ENCODE measurements at regions of chr9 and their contacts with region 1.

Region 1: GRCh38 chr9:112333639-112334431 is 416 bp upstream of the PTBP3 start:
- DNase-seq: peak; percentile 86 to 89 (median 87)
- H3K4me3 ChIP-seq: peak overlapping the region; percentile 31 to 81
- H3K4me3 Mint-ChIP-seq: peak overlapping the region; percentile 81 to 96 (median 94)
- H3K27ac ChIP-seq: peak overlapping the region; percentile 92
- H3K27ac Mint-ChIP-seq: peak overlapping the region; percentile 82 to 96 (median 92)
- H3K4me1 ChIP-seq: peaks cover 41% of the 10 kb centered on the region
- H3K4me1 Mint-ChIP-seq: peaks cover 23 to 45% (median 28%) of the 10 kb centered on the region in 4 donors
- H3K27me3 ChIP-seq: no peaks in the 10 kb centered on the region
- H3K27me3 Mint-ChIP-seq: no peaks in the 10 kb centered on the region

Region 2: DNA sequence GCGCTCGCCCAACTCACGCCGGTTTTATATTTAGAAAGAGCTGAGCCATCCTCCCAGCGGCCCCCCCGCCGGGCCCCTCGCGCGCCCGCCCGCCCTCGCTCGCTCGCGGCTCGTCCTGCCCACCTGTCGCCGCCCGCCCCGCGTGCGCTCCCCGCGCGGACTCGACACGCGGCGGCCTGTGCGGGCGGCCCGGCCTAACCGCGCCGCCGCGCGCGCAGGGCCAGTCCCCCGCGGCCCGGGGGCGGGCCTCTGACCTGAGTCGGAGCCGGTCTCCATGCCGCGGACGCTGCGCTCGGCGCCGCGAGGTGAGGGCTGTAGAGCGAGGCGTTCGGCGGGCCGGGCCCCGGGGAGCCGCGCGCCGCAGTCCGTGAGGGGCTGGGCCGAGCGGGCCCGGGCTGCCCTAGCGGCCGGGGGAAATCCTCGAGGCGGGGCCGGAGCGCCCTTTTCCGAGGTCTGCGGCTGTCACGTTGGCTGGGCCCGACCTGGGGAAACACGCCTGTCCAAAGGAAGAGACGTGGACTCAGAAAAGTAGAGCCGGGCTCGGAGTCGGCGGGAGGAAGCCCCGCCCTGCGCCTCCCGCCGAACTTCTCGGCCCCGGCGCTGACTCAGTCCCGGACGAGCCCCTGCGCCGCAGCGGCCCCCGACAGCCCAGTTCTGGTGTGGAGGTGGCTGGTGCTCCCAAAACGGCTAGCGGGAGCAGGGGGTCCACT is 849.8 kb before region 1 on chr9 and contains the start of gene ECPAS:
- CTCF ChIA-PET with region 1: no interaction called
- POLR2A ChIA-PET with region 1: no interaction called
- intact Hi-C with region 1: loop called (anchors 1 kb)
- DNase-seq: peak; percentile 66 to 72 (median 71)
- H3K4me3 ChIP-seq: peak within 1 kb of the TSS; percentile 69 to 89
- H3K4me3 Mint-ChIP-seq: peak within 1 kb of the TSS; percentile 81 to 90 (median 86)
- H3K27ac ChIP-seq: peak within 1 kb of the TSS; percentile 83
- H3K27ac Mint-ChIP-seq: peak within 1 kb of the TSS; percentile 86 to 93 (median 89)
- H3K4me1 ChIP-seq: peaks cover 11% of the 10 kb centered on the region
- H3K4me1 Mint-ChIP-seq: peaks cover 23 to 37% (median 28%) of the 10 kb centered on the region in 4 donors
- H3K27me3 ChIP-seq: no peaks in the 10 kb centered on the region
- H3K27me3 Mint-ChIP-seq: no peaks in the 10 kb centered on the region
- total RNA-seq, gene ECPAS: 77.6 to 80.3 TPM

Region 3: GRCh38 chr9:111896353-111896958 is 437.4 kb before region 1 on chr9 and contains the start of gene UGCG:
- CTCF ChIA-PET with region 1: no interaction called
- POLR2A ChIA-PET with region 1: interaction called, 15 read pairs
- intact Hi-C with region 1: loop called (anchors 1 kb)
- DNase-seq: peak; percentile 84 to 92 (median 89)
- H3K4me3 ChIP-seq: peak within 1 kb of the TSS; percentile 87 to 97
- H3K4me3 Mint-ChIP-seq: peak within 1 kb of the TSS; percentile 90 to 96 (median 93)
- H3K27ac ChIP-seq: peak within 1 kb of the TSS; percentile 70
- H3K27ac Mint-ChIP-seq: peak within 1 kb of the TSS; percentile 91 to 97 (median 95)
- H3K4me1 ChIP-seq: peaks cover 58% of the 10 kb centered on the region
- H3K4me1 Mint-ChIP-seq: peaks cover 23 to 32% (median 31%) of the 10 kb centered on the region in 4 donors
- H3K27me3 ChIP-seq: no peaks in the 10 kb centered on the region
- H3K27me3 Mint-ChIP-seq: no peaks in the 10 kb centered on the region
- total RNA-seq, gene UGCG: 26.3 to 29.7 TPM

Region 4: GRCh38 chr9:112061152-112061740 is 272.6 kb before region 1 on chr9:
- CTCF ChIA-PET with region 1: no interaction called
- POLR2A ChIA-PET with region 1: no interaction called
- intact Hi-C with region 1: no loop called
- DNase-seq: peak in 4 of 5 donors; percentile 16 to 53 (median 31)
- H3K4me3 ChIP-seq: no peak overlapping the region
- H3K4me3 Mint-ChIP-seq: no peak overlapping the region
- H3K27ac ChIP-seq: no peak overlapping the region
- H3K27ac Mint-ChIP-seq: peak overlapping the region in 6 of 7 donors; percentile 25 to 82 (median 56)
- H3K4me1 ChIP-seq: peaks cover 15% of the 10 kb centered on the region
- H3K4me1 Mint-ChIP-seq: peaks cover 13 to 34% (median 22%) of the 10 kb centered on the region in 4 donors
- H3K27me3 ChIP-seq: no peaks in the 10 kb centered on the region
- H3K27me3 Mint-ChIP-seq: no peaks in the 10 kb centered on the region

Region 5: DNA sequence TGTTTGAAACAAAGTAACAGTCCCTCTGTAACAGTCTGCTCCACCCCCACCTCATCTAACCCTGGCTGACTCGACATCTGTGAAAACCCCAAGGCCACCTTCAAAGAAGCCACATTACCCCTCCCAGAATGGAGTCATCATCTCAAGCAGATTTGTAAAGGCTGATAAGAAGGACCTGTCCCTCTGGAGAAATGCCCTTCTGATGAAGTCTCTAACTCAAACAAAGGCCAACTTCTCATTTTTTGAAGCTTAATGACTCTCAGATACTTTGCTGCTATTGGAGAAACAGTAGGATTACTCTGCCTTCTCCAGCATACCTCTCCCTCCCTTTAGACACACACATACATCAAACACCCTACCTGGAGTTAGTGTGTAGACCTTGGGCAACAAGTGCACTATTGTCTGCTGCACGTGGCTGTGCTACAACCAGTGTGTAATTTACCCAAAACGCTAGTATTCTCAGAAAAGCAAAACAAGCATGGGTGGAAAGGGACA is 153.4 kb before region 1 on chr9:
- CTCF ChIA-PET with region 1: interaction called, 4 read pairs
- POLR2A ChIA-PET with region 1: interaction called, 45 read pairs
- intact Hi-C with region 1: no loop called
- DNase-seq: peak; percentile 41 to 83 (median 52)
- H3K4me3 ChIP-seq: no peak overlapping the region
- H3K4me3 Mint-ChIP-seq: peak overlapping the region in 7 of 8 donors; percentile 55 to 79 (median 71)
- H3K27ac ChIP-seq: no peak overlapping the region
- H3K27ac Mint-ChIP-seq: peak overlapping the region; percentile 63 to 94 (median 85)
- H3K4me1 ChIP-seq: peaks cover 55% of the 10 kb centered on the region
- H3K4me1 Mint-ChIP-seq: peaks cover 44 to 68% (median 51%) of the 10 kb centered on the region in 4 donors
- H3K27me3 ChIP-seq: no peaks in the 10 kb centered on the region
- H3K27me3 Mint-ChIP-seq: no peaks in the 10 kb centered on the region

Region 6: DNA sequence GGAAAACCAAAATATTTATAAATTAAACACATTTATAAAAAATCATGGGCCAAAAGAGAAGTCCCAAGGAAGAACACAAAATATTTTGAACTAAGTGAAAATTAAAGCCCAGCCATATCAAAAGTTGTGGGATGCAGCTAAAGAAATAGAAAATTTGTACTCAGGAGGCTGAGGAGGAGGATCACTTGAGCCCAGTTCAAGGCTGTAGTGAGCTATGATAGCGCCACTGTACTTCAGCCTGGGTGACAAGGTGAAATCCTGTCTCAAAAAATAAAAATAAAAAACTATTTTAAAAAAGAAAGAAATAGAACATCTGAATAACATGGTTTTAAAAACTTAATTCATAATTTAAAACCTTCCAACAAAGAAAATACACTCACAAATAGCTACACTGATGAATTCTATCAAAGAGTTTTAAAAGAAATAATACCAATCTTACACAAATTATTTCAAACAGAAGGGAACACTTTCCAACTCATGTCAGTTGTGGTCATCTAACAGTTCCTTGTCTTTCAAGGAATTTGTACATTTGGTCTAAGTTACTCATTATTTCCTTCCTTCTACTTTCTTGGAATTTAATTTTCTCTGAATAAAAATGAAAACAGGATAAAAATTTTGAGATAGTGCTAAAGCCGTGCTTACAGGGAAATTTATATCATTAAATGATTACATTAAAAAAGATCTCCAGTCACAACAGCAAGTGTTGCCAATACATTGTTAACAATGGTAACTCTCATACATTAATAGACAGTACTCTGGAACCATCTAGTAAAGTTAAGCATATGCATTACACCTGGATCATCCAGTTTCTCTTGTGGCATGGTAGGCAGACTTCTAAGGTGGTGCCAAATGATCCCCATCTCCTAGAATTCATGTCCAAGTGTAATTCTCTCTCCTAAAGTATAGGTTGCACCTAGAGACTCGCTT is 18.2 kb before region 1 on chr9:
- CTCF ChIA-PET with region 1: interaction called, 8 read pairs
- POLR2A ChIA-PET with region 1: interaction called, 26 read pairs
- intact Hi-C with region 1: loop called (anchors 2 kb)
- DNase-seq: no peak
- H3K4me3 ChIP-seq: no peak overlapping the region
- H3K4me3 Mint-ChIP-seq: peak overlapping the region in 6 of 8 donors; percentile 42 to 95 (median 70)
- H3K27ac ChIP-seq: no peak overlapping the region
- H3K27ac Mint-ChIP-seq: peak overlapping the region; percentile 6 to 83 (median 50)
- H3K4me1 ChIP-seq: peaks cover 89% of the 10 kb centered on the region
- H3K4me1 Mint-ChIP-seq: peaks cover 49 to 92% (median 72%) of the 10 kb centered on the region in 4 donors
- H3K27me3 ChIP-seq: no peaks in the 10 kb centered on the region
- H3K27me3 Mint-ChIP-seq: no peaks in the 10 kb centered on the region

Region 7: DNA sequence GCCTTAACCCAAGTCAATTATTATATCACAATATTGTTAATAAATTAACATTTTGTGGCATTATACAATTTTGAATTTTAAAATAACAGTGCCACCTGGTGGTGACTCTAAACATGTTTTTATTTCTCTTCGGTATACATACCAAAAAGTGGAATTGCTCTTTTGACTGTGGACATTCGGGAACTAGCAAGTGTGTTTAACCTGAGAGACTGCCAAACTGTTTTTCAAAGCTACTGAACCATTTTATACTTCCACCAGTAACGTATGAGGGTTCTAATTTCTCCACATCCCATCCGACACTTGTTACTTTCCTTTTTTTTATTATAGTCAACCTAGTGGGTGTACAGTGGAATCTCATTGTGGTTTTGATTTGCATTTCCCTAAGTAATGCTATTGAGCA is 27.8 kb after region 1 on chr9:
- CTCF ChIA-PET with region 1: interaction called, 11 read pairs
- POLR2A ChIA-PET with region 1: no interaction called
- intact Hi-C with region 1: loop called (anchors 1 kb)
- DNase-seq: peak in 4 of 5 donors; percentile 42 to 48 (median 46)
- H3K4me3 ChIP-seq: no peak overlapping the region
- H3K4me3 Mint-ChIP-seq: no peak overlapping the region
- H3K27ac ChIP-seq: no peak overlapping the region
- H3K27ac Mint-ChIP-seq: no peak overlapping the region
- H3K4me1 ChIP-seq: no peaks in the 10 kb centered on the region
- H3K4me1 Mint-ChIP-seq: peaks cover 0 to 2% (median 1%) of the 10 kb centered on the region in 4 donors
- H3K27me3 ChIP-seq: no peaks in the 10 kb centered on the region
- H3K27me3 Mint-ChIP-seq: peaks cover 2 to 5% of the 10 kb centered on the region in 2 donors

Region 8: DNA sequence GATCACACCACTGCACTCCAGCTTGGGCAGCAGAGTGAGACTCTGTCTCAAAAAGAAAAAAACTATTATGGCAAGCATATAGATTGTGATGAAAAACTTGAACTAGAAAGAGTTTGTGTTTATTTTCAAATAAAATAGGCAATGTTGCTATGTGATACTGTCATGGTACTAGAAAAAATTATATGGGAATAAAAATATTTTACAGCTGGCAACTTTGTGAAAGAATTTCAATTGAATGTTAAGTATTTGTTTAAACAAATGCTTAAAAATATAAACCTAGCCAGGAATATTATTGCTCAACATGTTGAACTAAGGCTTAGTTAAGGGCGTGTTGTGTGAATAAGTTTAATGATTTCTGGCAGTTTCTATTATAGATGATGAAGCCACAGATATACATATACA is 77.8 kb after region 1 on chr9:
- CTCF ChIA-PET with region 1: no interaction called
- POLR2A ChIA-PET with region 1: no interaction called
- intact Hi-C with region 1: no loop called
- DNase-seq: no peak
- H3K4me3 ChIP-seq: no peak overlapping the region
- H3K4me3 Mint-ChIP-seq: no peak overlapping the region
- H3K27ac ChIP-seq: no peak overlapping the region
- H3K27ac Mint-ChIP-seq: no peak overlapping the region
- H3K4me1 ChIP-seq: no peaks in the 10 kb centered on the region
- H3K4me1 Mint-ChIP-seq: no peaks in the 10 kb centered on the region
- H3K27me3 ChIP-seq: no peaks in the 10 kb centered on the region
- H3K27me3 Mint-ChIP-seq: no peaks in the 10 kb centered on the region

Region 9: GRCh38 chr9:112647596-112647995 is 313.8 kb after region 1 on chr9:
- CTCF ChIA-PET with region 1: no interaction called
- POLR2A ChIA-PET with region 1: no interaction called
- intact Hi-C with region 1: no loop called
- DNase-seq: no peak
- H3K4me3 ChIP-seq: no peak overlapping the region
- H3K4me3 Mint-ChIP-seq: no peak overlapping the region
- H3K27ac ChIP-seq: no peak overlapping the region
- H3K27ac Mint-ChIP-seq: no peak overlapping the region
- H3K4me1 ChIP-seq: no peaks in the 10 kb centered on the region
- H3K4me1 Mint-ChIP-seq: no peaks in the 10 kb centered on the region
- H3K27me3 ChIP-seq: no peaks in the 10 kb centered on the region
- H3K27me3 Mint-ChIP-seq: peaks cover 5% of the 10 kb centered on the region in 2 donors

Region 10: GRCh38 chr9:112717661-112718341 is 384.0 kb after region 1 on chr9 and contains the start of gene INIP:
- CTCF ChIA-PET with region 1: no interaction called
- POLR2A ChIA-PET with region 1: interaction called, 5 read pairs
- intact Hi-C with region 1: loop called (anchors 1 kb)
- DNase-seq: peak; percentile 97 to 98 (median 98)
- H3K4me3 ChIP-seq: peak within 1 kb of the TSS; percentile 78 to 95
- H3K4me3 Mint-ChIP-seq: peak within 1 kb of the TSS; percentile 93 to 99 (median 98)
- H3K27ac ChIP-seq: peak within 1 kb of the TSS; percentile 88
- H3K27ac Mint-ChIP-seq: peak within 1 kb of the TSS; percentile 94 to 99 (median 99)
- H3K4me1 ChIP-seq: peaks cover 25% of the 10 kb centered on the region
- H3K4me1 Mint-ChIP-seq: peaks cover 15 to 37% (median 26%) of the 10 kb centered on the region in 4 donors
- H3K27me3 ChIP-seq: no peaks in the 10 kb centered on the region
- H3K27me3 Mint-ChIP-seq: no peaks in the 10 kb centered on the region
- total RNA-seq, gene INIP: 25.2 to 33.4 TPM